Common myeloid progenitor, CD34-positive (primary cell): ENCODE measurements at regions of chr17 and their contacts with region 1.

Region 1: GRCh38 chr17:72725433-72726068 is 366.9 kb downstream of the SLC39A11 start:
- DNase-seq: peak; percentile 39 to 52 (median 52)
- H3K4me3 ChIP-seq: no peak overlapping the region
- H3K27ac ChIP-seq: no peak overlapping the region
- H3K4me1 ChIP-seq: peaks cover 4 to 45% (median 21%) of the 10 kb centered on the region in 4 experiments
- H3K27me3 ChIP-seq: no peaks in the 10 kb centered on the region

Region 2: DNA sequence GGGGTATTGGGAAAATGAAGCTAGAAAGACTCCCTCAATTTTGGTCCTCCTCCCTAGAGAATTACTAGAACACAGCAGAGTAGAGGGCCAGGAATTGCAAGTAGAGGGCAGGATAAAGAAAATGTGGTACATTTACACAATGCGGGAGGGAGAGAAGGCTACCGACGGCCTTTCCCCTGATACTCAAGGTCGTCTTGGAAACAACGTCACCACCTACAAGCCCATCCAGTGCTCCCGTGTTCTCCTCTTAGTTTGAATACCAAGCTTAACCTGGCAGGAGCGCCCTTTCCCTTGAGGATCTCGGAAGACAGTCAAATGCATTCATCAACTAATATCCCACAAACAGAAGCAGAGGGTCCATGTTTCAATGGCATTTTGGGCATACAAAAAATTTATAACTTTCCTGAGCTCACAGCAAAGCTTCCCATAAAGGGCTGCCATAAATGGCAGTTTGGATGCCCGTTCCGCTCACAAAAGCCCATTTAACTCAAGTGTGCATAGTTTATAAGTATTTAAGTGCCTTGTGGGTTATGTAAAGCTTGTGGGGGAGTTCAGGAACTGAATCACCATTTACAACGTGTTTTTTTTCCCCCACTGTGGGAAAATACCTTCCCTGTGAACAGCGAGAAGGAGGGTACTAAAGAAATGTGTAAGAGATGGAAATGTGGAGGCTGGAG is 47.7 kb before region 1 on chr17:
- CTCF ChIA-PET with region 1: no interaction called
- POLR2A ChIA-PET with region 1: no interaction called
- DNase-seq: no peak
- H3K4me3 ChIP-seq: no peak overlapping the region
- H3K27ac ChIP-seq: no peak overlapping the region
- H3K4me1 ChIP-seq: no peaks in the 10 kb centered on the region
- H3K27me3 ChIP-seq: no peaks in the 10 kb centered on the region

Region 3: DNA sequence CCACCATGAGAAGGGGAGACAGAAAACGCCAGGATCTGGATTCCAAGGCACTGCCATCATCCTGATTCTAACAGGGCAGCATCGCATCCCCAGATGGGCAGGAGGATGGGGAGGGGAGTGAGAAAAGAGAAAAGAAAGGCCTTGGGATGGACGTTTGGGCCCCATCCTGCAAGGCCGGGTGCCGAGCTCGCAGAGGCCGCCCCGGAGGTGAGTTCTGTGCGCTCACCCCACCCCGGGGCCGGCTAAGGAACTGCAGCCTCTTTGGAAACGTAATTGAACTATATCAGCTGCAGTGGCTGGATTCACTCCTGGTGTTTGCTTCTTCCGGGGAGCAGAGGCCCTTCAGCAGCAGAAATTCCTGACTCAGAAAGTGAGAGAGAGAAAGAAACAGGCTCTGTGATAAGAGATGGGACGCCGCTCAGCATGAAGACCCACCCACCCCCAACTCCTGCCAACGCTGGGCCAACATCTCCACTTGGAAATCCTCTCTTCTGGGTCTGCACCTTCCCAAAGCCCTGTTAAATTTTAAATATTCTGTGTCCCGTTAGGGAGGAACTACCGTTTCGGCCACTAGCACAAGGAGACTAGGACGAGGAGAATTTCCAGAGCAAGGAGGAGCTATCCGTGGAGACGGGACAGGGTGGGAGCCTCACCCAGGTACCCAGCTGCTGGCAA is 430.8 kb after region 1 on chr17:
- CTCF ChIA-PET with region 1: interaction called, 29 read pairs
- POLR2A ChIA-PET with region 1: no interaction called
- DNase-seq: peak in 2 of 3 donors; percentile 52
- H3K4me3 ChIP-seq: no peak overlapping the region
- H3K27ac ChIP-seq: no peak overlapping the region
- H3K4me1 ChIP-seq: peaks cover 0 to 7% (median 3%) of the 10 kb centered on the region in 4 experiments
- H3K27me3 ChIP-seq: peaks cover 0 to 20% (median 6%) of the 10 kb centered on the region in 5 experiments

Region 4: GRCh38 chr17:73182616-73183310 is 457.2 kb after region 1 on chr17:
- CTCF ChIA-PET with region 1: interaction called, 55 read pairs
- POLR2A ChIA-PET with region 1: no interaction called
- DNase-seq: no peak
- H3K4me3 ChIP-seq: no peak overlapping the region
- H3K27ac ChIP-seq: no peak overlapping the region
- H3K4me1 ChIP-seq: peaks cover 0 to 11% (median 3%) of the 10 kb centered on the region in 4 experiments
- H3K27me3 ChIP-seq: no peaks in the 10 kb centered on the region

Region 5: GRCh38 chr17:73247726-73248125 is 522.2 kb after region 1 on chr17:
- CTCF ChIA-PET with region 1: interaction called, 32 read pairs
- POLR2A ChIA-PET with region 1: no interaction called
- DNase-seq: no peak
- H3K4me3 ChIP-seq: no peak overlapping the region
- H3K27ac ChIP-seq: no peak overlapping the region
- H3K4me1 ChIP-seq: no peaks in the 10 kb centered on the region
- H3K27me3 ChIP-seq: no peaks in the 10 kb centered on the region

Region 6: GRCh38 chr17:73371285-73371684 is 645.7 kb after region 1 on chr17:
- CTCF ChIA-PET with region 1: interaction called, 10 read pairs
- POLR2A ChIA-PET with region 1: no interaction called
- DNase-seq: peak; percentile 6 to 22 (median 18)
- H3K4me3 ChIP-seq: no peak overlapping the region
- H3K27ac ChIP-seq: no peak overlapping the region
- H3K4me1 ChIP-seq: peaks cover 0 to 14% (median 7%) of the 10 kb centered on the region in 4 experiments
- H3K27me3 ChIP-seq: peaks cover 0 to 2% (median 0%) of the 10 kb centered on the region in 5 experiments